ENCODE measurements at regions of chr13 and their contacts with region 1.

Region 1: GRCh38 chr13:51619614-51620013 is 35.4 kb downstream of the WDFY2 start:
- DNase-seq: no peak
- H3K4me3 ChIP-seq: no peak overlapping the region
- H3K4me3 Mint-ChIP-seq: no peak overlapping the region
- H3K27ac Mint-ChIP-seq: no peak overlapping the region
- H3K4me1 ChIP-seq: no peaks in the 10 kb centered on the region
- H3K4me1 Mint-ChIP-seq: no peaks in the 10 kb centered on the region
- H3K27me3 ChIP-seq: no peaks in the 10 kb centered on the region
- H3K27me3 Mint-ChIP-seq: no peaks in the 10 kb centered on the region
- CTCF ChIP-seq: no peak

Region 2: DNA sequence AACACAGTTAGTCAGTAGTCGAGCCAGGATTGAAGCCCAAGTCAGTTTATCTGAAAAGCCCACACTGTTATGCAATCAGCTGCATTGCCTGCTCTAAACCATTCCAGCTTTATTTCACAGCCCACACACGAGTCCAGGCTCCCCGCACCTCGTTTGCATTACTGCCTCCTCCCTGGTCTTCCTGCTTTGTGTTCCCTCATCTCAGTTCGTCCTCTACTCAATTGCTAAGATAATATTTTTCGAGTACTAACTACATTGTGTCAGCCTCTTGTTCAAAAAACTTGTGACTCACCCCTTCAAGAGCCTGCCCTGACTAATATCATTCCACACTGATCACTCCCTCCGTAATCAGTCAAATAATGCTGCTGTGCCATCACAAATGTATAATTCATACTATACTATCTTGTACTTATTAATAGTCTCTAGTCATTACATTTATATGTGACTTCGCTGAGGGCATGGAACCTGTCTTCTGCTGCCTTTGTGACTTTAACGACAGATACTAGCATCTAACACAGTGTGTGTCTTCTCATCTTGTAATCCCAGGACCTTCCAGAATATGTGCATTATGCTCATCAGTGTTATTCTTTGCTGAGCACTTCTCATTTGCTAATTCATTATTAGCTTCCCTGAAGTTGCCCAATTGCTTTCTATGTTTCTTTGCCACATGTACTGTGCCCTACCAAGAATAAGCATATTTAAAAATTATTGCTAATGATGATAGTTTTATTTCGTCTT is 61.6 kb before region 1 on chr13:
- CTCF ChIA-PET with region 1: no interaction called
- POLR2A ChIA-PET with region 1: no interaction called
- intact Hi-C with region 1: loop called (anchors 2 kb)
- DNase-seq: no peak
- H3K4me3 ChIP-seq: no peak overlapping the region
- H3K4me3 Mint-ChIP-seq: no peak overlapping the region
- H3K27ac Mint-ChIP-seq: no peak overlapping the region
- H3K4me1 ChIP-seq: no peaks in the 10 kb centered on the region
- H3K4me1 Mint-ChIP-seq: peaks cover 7% of the 10 kb centered on the region
- H3K27me3 ChIP-seq: no peaks in the 10 kb centered on the region
- H3K27me3 Mint-ChIP-seq: peaks cover 6% of the 10 kb centered on the region
- CTCF ChIP-seq: no peak

Region 3: GRCh38 chr13:51874651-51875050 is 255.0 kb after region 1 on chr13:
- CTCF ChIA-PET with region 1: no interaction called
- POLR2A ChIA-PET with region 1: no interaction called
- intact Hi-C with region 1: no loop called
- DNase-seq: no peak
- H3K4me3 ChIP-seq: no peak overlapping the region
- H3K4me3 Mint-ChIP-seq: no peak overlapping the region
- H3K27ac Mint-ChIP-seq: no peak overlapping the region
- H3K4me1 ChIP-seq: no peaks in the 10 kb centered on the region
- H3K4me1 Mint-ChIP-seq: no peaks in the 10 kb centered on the region
- H3K27me3 ChIP-seq: no peaks in the 10 kb centered on the region
- H3K27me3 Mint-ChIP-seq: peaks cover 4% of the 10 kb centered on the region
- CTCF ChIP-seq: no peak

Region 4: DNA sequence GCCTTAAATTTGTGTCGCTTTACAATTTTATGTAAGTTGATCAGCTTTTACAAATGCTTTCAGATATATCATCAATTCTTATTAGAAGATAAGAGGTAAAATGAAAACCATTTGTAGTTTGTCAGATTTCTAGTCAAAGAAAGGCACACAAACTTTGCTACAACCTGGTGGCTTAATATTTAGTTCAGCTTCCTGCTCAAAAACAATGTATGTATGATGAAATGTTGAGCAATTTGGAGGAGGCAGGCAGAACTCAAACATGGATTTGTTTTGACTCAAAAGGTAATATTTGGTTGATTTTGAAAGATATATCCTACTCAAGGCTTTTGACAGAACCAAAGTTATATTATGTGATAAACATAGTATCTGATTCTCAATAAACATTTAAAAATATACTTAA is 485.0 kb after region 1 on chr13:
- CTCF ChIA-PET with region 1: no interaction called
- POLR2A ChIA-PET with region 1: no interaction called
- intact Hi-C with region 1: no loop called
- DNase-seq: peak in 1 of 2 experiments; percentile 21
- H3K4me3 ChIP-seq: no peak overlapping the region
- H3K4me3 Mint-ChIP-seq: no peak overlapping the region
- H3K27ac Mint-ChIP-seq: peak overlapping the region; percentile 76
- H3K4me1 ChIP-seq: peaks cover 18% of the 10 kb centered on the region
- H3K4me1 Mint-ChIP-seq: peaks cover 11% of the 10 kb centered on the region
- H3K27me3 ChIP-seq: no peaks in the 10 kb centered on the region
- H3K27me3 Mint-ChIP-seq: no peaks in the 10 kb centered on the region
- CTCF ChIP-seq: no peak

Measured in Caco-2 (cell line).